Right ventricle myocardium inferior (tissue), 1 donor: ENCODE measurements at regions of chr3 and their contacts with region 1.

Region 1: DNA sequence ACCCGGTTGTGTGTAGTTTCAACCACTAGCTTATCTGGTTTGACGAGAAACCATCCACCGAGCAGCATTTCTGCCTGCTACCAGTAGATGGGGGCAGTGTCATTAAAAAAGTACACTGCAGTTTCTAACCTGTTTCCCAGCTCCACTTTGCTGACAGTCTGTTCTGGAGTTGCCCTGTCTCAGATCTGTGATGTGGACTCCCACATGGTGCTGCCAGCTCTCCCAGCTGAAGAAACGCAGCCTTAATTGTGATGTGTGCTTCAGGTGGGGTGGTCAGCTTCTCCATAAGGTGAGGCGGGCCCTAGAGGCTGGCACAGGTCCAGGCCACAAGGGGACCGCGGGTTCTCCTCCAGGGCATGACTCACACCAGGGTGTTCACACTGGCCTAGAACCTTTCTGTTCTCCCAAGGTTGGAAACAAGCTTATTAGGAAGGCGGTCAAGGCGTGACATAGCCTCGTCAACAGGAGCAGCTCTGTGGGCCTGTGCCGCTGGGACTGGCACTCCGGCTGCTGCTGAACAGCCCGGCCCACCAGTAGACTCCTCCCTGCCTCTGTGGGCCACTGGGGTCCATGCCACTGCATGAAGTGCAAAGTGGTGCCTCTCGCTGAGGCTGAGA is 2.9 kb upstream of the FAM43A start:
- DNase-seq: no peak
- ATAC-seq: peak; percentile 64

Region 2: DNA sequence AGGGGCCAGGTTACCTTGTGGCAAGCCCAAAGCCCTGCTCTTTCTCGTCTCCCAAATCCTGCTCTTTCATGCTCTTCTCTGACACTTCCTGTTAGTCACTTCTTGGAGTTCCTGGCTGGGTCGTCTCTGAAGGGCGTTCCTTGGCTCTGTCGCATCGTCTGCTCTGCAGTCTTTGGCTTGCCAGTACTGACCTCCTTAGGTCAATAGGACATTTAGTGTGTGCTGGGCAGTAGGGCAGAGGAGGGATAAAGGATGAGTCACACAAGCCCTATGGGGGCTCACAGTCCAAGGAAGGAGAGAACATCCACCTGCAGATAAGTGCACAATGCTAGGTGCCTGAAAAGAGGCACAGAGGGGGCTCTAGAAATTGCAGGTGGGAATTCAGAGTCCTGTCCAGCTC is 90.4 kb after region 1 on chr3:
- intact Hi-C with region 1: loop called (anchors 2 kb)
- DNase-seq: no peak
- ATAC-seq: peak; percentile 54

Region 3: GRCh38 chr3:194785315-194785714 is 102.5 kb after region 1 on chr3:
- intact Hi-C with region 1: no loop called
- DNase-seq: no peak
- ATAC-seq: peak; percentile 50

Region 4: GRCh38 chr3:194879991-194880939 is 197.5 kb after region 1 on chr3:
- intact Hi-C with region 1: loop called (anchors 2 kb)
- DNase-seq: peak; percentile 81
- ATAC-seq: peak; percentile 80

Region 5: GRCh38 chr3:194952841-194953241 is 270.0 kb after region 1 on chr3:
- intact Hi-C with region 1: loop called (anchors 5 kb)
- DNase-seq: no peak
- ATAC-seq: peak; percentile 36

Region 6: GRCh38 chr3:195001961-195002861 is 319.4 kb after region 1 on chr3:
- intact Hi-C with region 1: loop called (anchors 5 kb)
- DNase-seq: no peak
- ATAC-seq: peak; percentile 43

Region 7: GRCh38 chr3:195259475-195260279 is 576.9 kb after region 1 on chr3:
- intact Hi-C with region 1: loop called (anchors 1 kb)
- DNase-seq: peak; percentile 94
- ATAC-seq: peak; percentile 89